Activated CD4-positive, alpha-beta memory T cell treated with anti-CD3 and anti-CD28 coated beads, Interleukin-2, amount 10 ng/mL, durations not matched to agents 7 days and 5 days (primary cell): ENCODE measurements at regions of chr2 and their contacts with region 1.

Region 1: GRCh38 chr2:227805578-227805977 is 8.1 kb upstream of the CCL20 start:
- DNase-seq: peak; percentile 52
- H3K4me3 Mint-ChIP-seq: peak overlapping the region; percentile 70
- H3K27ac Mint-ChIP-seq: peak overlapping the region; percentile 74
- H3K4me1 Mint-ChIP-seq: peaks cover 16% of the 10 kb centered on the region
- H3K27me3 Mint-ChIP-seq: no peaks in the 10 kb centered on the region

Region 2: DNA sequence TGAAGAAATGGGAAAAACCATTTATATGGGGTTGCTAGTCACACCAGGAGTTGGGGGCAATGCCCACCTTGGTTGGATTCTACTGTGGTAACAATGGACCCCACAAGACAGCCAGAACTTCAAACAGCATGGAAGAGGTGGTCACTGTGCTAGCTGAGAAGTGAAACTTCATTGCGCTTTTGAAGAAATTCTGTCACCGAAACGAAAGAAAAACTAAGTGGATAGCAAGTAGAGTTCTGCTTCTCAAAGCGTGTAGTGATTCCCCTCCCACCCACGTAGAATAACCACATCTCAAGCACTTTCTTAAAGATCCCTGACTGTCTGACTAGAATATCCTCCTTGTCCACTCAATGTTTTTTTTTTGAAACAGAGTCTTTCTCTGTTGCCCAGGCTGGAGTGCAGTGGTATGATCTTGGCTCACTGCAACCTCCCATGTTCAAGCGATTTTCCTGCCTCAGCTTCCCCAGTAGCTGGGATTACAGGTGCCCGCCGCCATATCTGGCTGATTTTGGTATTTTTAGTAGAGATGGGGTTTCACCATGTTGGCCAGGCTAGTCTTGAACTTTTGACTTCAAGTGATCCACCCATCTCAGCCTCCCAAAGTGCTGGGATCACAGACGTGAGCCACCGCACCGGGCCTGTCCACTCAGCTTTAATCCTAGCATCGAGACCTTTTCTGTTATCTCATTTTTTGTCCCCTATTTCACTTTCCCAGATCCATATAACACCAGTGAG is 22.0 kb before region 1 on chr2:
- CTCF ChIA-PET with region 1: interaction called, 3 read pairs
- POLR2A ChIA-PET with region 1: interaction called, 11 read pairs
- DNase-seq: peak; percentile 21
- H3K4me3 Mint-ChIP-seq: peak overlapping the region; percentile 68
- H3K27ac Mint-ChIP-seq: peak overlapping the region; percentile 66
- H3K4me1 Mint-ChIP-seq: peaks cover 23% of the 10 kb centered on the region
- H3K27me3 Mint-ChIP-seq: peaks cover 6% of the 10 kb centered on the region

Region 3: DNA sequence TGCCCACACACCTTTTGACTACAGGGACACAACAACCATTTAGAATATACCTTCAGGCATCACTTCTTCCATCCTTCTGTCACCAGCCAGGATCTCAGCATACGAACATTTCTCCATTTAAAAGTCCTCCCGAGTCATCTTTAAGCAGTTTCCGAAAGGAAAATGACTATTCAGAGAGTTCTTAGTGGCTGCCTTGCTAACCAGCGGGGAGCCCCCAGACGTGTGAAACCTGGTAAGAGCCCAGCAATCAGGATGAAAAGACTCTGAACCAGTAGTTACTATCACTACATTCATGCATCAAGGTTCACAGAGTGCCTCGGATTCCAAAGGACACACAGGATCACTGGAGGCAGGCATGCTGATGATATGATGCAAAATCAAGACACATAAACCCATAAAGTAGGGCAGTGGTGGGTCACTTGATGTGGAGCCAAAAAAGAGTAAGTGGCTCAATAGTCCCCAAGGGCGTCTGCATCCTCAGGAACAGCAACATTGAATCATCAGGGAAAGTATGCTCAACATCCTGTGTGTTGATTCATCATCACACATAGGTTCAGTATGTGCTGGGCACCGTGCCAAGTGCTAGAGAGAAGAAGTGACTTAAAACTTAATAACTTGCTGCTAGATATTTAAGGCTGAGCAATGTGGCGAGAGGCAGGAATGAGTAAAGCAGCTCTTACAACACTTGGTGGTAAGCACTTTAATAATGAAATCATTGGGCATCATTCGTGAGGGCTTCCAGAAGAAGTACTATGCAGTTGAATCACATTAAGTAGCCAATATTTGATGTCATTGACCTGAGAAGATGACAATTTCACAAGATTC is 12.5 kb after region 1 on chr2:
- CTCF ChIA-PET with region 1: interaction called, 5 read pairs
- POLR2A ChIA-PET with region 1: interaction called, 10 read pairs
- DNase-seq: peak; percentile 81
- H3K4me3 Mint-ChIP-seq: peak overlapping the region; percentile 3
- H3K27ac Mint-ChIP-seq: peak overlapping the region; percentile 78
- H3K4me1 Mint-ChIP-seq: peaks cover 30% of the 10 kb centered on the region
- H3K27me3 Mint-ChIP-seq: peaks cover 3% of the 10 kb centered on the region

Region 4: GRCh38 chr2:227903381-227903780 is 97.8 kb after region 1 on chr2:
- CTCF ChIA-PET with region 1: no interaction called
- POLR2A ChIA-PET with region 1: no interaction called
- DNase-seq: no peak
- H3K4me3 Mint-ChIP-seq: no peak overlapping the region
- H3K27ac Mint-ChIP-seq: no peak overlapping the region
- H3K4me1 Mint-ChIP-seq: no peaks in the 10 kb centered on the region
- H3K27me3 Mint-ChIP-seq: no peaks in the 10 kb centered on the region